ENCODE measurements at regions of chr18 and their contacts with region 1.

Region 1: DNA sequence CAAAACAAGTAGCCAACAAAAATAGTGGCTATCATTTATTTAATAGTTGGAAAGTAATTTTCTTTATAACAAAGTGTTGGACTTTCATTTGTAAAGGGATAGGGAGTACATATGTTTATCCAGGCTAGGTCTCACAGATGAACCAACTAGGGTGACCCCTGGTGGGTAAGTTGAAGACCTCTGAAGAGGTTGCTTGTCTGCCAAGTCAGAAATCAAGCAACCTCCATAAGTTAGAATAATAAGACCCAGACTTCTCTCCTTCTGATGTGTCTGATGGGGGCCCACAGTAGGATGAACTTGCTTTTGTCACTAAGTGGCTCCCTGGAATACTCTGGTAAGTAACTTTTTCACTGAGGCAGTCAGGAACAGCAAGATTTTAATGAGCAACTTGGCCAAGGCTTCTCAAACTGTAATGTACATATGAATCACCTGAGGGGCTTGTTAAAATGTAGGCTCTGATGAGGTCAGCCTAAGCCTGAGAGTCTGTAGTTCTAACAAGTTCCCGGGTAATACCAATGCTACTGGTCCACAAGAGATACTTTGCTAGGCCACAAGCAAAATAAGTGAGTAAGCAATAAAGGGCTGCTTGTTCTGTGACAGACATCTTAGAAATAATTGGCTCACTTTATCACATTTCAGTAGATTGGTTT is 319.6 kb downstream of the PIK3C3 start:
- DNase-seq: peak in 1 of 14 experiments; percentile 2
- ATAC-seq: no peak
- H3K4me3 ChIP-seq: no peak overlapping the region
- H3K4me3 Mint-ChIP-seq: no peak overlapping the region
- H3K27ac ChIP-seq: no peak overlapping the region
- H3K27ac Mint-ChIP-seq: no peak overlapping the region
- H3K4me1 ChIP-seq: no peaks in the 10 kb centered on the region
- H3K4me1 Mint-ChIP-seq: no peaks in the 10 kb centered on the region
- H3K27me3 ChIP-seq: no peaks in the 10 kb centered on the region
- H3K27me3 Mint-ChIP-seq: no peaks in the 10 kb centered on the region
- CTCF ChIP-seq: no peak

Region 2: GRCh38 chr18:42229211-42230210 is 45.1 kb before region 1 on chr18:
- CTCF ChIA-PET with region 1: no interaction called
- POLR2A ChIA-PET with region 1: no interaction called
- intact Hi-C with region 1: loop called in 1 of 2 experiments (anchors 1 kb)
- DNase-seq: no peak
- ATAC-seq: no peak
- H3K4me3 ChIP-seq: no peak overlapping the region
- H3K4me3 Mint-ChIP-seq: no peak overlapping the region
- H3K27ac ChIP-seq: no peak overlapping the region
- H3K27ac Mint-ChIP-seq: no peak overlapping the region
- H3K4me1 ChIP-seq: no peaks in the 10 kb centered on the region
- H3K4me1 Mint-ChIP-seq: no peaks in the 10 kb centered on the region
- H3K27me3 ChIP-seq: no peaks in the 10 kb centered on the region
- H3K27me3 Mint-ChIP-seq: no peaks in the 10 kb centered on the region
- CTCF ChIP-seq: no peak

Region 3: DNA sequence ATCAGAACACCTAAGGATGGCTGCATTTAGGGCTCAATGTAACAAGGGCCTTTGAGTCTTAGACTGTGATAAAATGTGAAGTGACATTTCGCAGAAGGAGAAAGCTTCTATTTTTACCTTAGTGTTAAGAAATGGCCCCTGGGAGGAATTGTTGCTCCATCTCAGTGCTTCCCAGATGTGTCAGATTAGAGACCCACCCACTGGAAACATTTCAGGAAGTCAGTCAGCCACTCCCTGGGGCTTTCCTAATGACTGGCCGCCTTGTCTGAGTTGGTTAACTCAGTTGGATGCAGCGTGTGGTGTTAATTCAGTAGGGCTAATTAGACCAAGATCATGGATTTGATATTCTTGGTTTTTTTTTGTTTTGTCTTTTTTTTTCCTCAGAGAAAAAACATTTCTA is 36.3 kb after region 1 on chr18:
- CTCF ChIA-PET with region 1: no interaction called
- POLR2A ChIA-PET with region 1: no interaction called
- intact Hi-C with region 1: no loop called
- DNase-seq: peak in 1 of 14 experiments; percentile 11
- ATAC-seq: no peak
- H3K4me3 ChIP-seq: no peak overlapping the region
- H3K4me3 Mint-ChIP-seq: no peak overlapping the region
- H3K27ac ChIP-seq: no peak overlapping the region
- H3K27ac Mint-ChIP-seq: no peak overlapping the region
- H3K4me1 ChIP-seq: no peaks in the 10 kb centered on the region
- H3K4me1 Mint-ChIP-seq: no peaks in the 10 kb centered on the region
- H3K27me3 ChIP-seq: no peaks in the 10 kb centered on the region
- H3K27me3 Mint-ChIP-seq: no peaks in the 10 kb centered on the region
- CTCF ChIP-seq: no peak